ENCODE measurements at regions of chr1 and their contacts with region 1.

Region 1: DNA sequence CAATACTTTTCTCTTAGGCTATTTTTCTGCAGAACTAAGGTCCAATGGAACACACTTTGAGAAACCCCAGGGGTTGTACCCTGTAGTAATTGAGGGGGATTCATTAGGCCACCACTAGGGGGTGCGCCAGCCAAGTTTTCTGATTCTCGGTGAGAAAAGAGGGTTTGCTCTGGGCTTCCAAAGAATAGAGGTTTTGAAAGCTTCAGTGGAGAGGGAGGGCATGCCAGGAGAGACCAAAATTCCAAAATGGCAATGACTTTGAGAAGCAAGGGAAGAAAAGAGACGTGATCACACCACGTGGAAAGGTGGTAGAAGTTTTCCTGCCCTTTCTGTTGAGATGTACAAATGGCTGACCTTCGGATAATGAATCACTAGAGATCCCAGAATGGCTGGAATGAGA is 323.3 kb downstream of the RPS6KC1 start:
- DNase-seq: peak; percentile 23
- H3K4me3 ChIP-seq: no peak overlapping the region
- H3K27ac ChIP-seq: no peak overlapping the region
- H3K4me1 ChIP-seq: no peaks in the 10 kb centered on the region
- H3K27me3 ChIP-seq: no peaks in the 10 kb centered on the region
- CTCF ChIP-seq: peak; percentile 83 to 90

Region 2: GRCh38 chr1:213110349-213111300 is 263.7 kb before region 1 on chr1:
- CTCF ChIA-PET with region 1: no interaction called
- dilution Hi-C with region 1: no loop called
- in situ Hi-C with region 1: no loop called
- intact Hi-C with region 1: no loop called
- DNase-seq: no peak
- H3K4me3 ChIP-seq: no peak overlapping the region
- H3K27ac ChIP-seq: no peak overlapping the region
- H3K4me1 ChIP-seq: no peaks in the 10 kb centered on the region
- H3K27me3 ChIP-seq: no peaks in the 10 kb centered on the region
- CTCF ChIP-seq: no peak

Region 3: DNA sequence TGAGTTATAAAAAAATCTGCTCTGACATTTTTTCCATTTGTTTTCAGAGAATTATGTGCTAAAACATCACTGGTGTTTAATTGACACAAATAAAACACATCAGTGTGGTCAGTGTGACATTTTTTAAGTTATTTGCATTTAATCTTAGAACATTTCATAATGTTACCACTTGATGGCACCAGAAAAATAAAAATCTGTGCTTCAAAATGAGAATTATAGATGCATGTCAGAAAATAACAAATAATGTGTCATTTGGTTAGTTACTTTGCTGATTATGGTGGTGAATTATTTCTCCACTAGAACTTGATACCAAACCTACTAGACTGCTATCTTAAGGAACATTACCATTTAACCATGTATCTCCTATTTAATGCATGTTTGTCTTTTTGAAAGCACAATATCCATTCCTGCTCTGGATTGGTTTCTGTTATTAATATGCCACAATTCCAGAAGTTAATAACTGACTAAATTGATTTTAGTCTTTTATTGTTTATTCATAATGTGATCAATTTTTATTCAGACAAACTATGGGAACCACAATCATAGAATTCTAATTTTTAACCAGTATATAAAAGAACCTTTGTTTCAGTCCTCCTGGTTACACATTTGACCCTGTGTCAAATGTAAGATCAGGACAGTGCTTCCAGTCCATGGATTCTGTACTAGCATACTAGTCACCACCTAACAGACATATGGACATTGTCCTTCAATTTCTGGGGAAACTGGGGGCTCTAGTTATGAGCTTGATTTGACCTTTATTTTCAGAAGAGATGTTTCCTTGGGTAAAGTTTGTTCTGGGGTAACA is 242.3 kb before region 1 on chr1:
- CTCF ChIA-PET with region 1: no interaction called
- dilution Hi-C with region 1: no loop called
- in situ Hi-C with region 1: no loop called
- intact Hi-C with region 1: loop called (anchors 5 kb)
- DNase-seq: no peak
- H3K4me3 ChIP-seq: no peak overlapping the region
- H3K27ac ChIP-seq: no peak overlapping the region
- H3K4me1 ChIP-seq: no peaks in the 10 kb centered on the region
- H3K27me3 ChIP-seq: no peaks in the 10 kb centered on the region
- CTCF ChIP-seq: no peak

Region 4: GRCh38 chr1:213176341-213176740 is 198.0 kb before region 1 on chr1:
- CTCF ChIA-PET with region 1: no interaction called
- dilution Hi-C with region 1: no loop called
- in situ Hi-C with region 1: no loop called
- intact Hi-C with region 1: no loop called
- DNase-seq: no peak
- H3K4me3 ChIP-seq: no peak overlapping the region
- H3K27ac ChIP-seq: no peak overlapping the region
- H3K4me1 ChIP-seq: no peaks in the 10 kb centered on the region
- H3K27me3 ChIP-seq: no peaks in the 10 kb centered on the region
- CTCF ChIP-seq: no peak

Region 5: GRCh38 chr1:213231795-213232231 is 142.6 kb before region 1 on chr1:
- CTCF ChIA-PET with region 1: no interaction called
- dilution Hi-C with region 1: no loop called
- in situ Hi-C with region 1: no loop called
- intact Hi-C with region 1: no loop called
- DNase-seq: no peak
- H3K4me3 ChIP-seq: no peak overlapping the region
- H3K27ac ChIP-seq: no peak overlapping the region
- H3K4me1 ChIP-seq: no peaks in the 10 kb centered on the region
- H3K27me3 ChIP-seq: no peaks in the 10 kb centered on the region
- CTCF ChIP-seq: no peak

Region 6: DNA sequence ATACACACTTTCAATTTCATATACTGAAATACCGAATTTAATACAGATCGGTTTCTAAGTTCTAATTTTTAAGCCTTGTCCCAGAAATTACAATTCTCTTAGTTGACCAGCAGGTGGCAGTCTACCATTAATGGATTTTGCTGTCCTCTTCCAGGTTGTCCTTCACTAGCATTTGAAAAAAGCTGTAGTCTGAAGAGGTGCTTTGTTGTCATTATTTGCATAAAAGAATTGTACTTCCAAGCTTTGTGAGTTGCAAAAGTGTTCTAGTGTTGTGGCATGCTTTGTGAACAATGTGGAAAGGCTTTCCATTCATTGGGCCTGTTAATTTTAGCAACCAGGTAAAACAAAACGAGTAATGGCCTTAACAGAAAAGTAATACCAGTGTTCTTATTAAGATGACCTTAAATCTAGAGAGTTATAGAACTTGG is 129.7 kb before region 1 on chr1:
- CTCF ChIA-PET with region 1: no interaction called
- dilution Hi-C with region 1: no loop called
- in situ Hi-C with region 1: no loop called
- intact Hi-C with region 1: loop called (anchors 5 kb)
- DNase-seq: peak; percentile 14
- H3K4me3 ChIP-seq: no peak overlapping the region
- H3K27ac ChIP-seq: no peak overlapping the region
- H3K4me1 ChIP-seq: no peaks in the 10 kb centered on the region
- H3K27me3 ChIP-seq: no peaks in the 10 kb centered on the region
- CTCF ChIP-seq: peak; percentile 65 to 67

Region 7: GRCh38 chr1:213330281-213330680 is 44.1 kb before region 1 on chr1:
- CTCF ChIA-PET with region 1: no interaction called
- dilution Hi-C with region 1: no loop called
- in situ Hi-C with region 1: no loop called
- intact Hi-C with region 1: no loop called
- DNase-seq: no peak
- H3K4me3 ChIP-seq: no peak overlapping the region
- H3K27ac ChIP-seq: no peak overlapping the region
- H3K4me1 ChIP-seq: peaks cover 18% of the 10 kb centered on the region
- H3K27me3 ChIP-seq: no peaks in the 10 kb centered on the region
- CTCF ChIP-seq: no peak

Region 8: DNA sequence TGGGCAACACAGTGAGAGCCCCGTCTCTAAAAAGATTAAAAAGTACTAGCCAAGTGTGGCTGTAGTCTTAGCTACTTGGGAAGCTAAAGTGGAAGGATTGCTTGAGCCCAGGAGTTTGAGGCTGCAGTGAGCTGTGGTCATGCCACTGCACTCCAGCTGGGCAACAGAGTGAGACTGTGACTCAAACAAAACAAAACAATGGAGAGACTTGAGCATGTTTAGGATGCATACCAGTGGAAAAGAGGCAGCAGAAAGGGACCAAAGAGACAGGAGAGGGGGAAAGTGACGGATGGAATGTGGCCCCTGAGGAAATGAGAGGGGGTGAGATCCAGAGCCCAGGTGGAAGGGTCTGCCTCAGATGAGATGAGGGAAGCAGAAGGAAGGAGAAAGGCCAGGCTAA is 35.6 kb after region 1 on chr1:
- CTCF ChIA-PET with region 1: no interaction called
- dilution Hi-C with region 1: loop called (anchors 5 kb)
- in situ Hi-C with region 1: no loop called
- intact Hi-C with region 1: no loop called
- DNase-seq: no peak
- H3K4me3 ChIP-seq: no peak overlapping the region
- H3K27ac ChIP-seq: no peak overlapping the region
- H3K4me1 ChIP-seq: no peaks in the 10 kb centered on the region
- H3K27me3 ChIP-seq: no peaks in the 10 kb centered on the region
- CTCF ChIP-seq: no peak